ENCODE measurements at regions of chr2 and their contacts with region 1.

Region 1: DNA sequence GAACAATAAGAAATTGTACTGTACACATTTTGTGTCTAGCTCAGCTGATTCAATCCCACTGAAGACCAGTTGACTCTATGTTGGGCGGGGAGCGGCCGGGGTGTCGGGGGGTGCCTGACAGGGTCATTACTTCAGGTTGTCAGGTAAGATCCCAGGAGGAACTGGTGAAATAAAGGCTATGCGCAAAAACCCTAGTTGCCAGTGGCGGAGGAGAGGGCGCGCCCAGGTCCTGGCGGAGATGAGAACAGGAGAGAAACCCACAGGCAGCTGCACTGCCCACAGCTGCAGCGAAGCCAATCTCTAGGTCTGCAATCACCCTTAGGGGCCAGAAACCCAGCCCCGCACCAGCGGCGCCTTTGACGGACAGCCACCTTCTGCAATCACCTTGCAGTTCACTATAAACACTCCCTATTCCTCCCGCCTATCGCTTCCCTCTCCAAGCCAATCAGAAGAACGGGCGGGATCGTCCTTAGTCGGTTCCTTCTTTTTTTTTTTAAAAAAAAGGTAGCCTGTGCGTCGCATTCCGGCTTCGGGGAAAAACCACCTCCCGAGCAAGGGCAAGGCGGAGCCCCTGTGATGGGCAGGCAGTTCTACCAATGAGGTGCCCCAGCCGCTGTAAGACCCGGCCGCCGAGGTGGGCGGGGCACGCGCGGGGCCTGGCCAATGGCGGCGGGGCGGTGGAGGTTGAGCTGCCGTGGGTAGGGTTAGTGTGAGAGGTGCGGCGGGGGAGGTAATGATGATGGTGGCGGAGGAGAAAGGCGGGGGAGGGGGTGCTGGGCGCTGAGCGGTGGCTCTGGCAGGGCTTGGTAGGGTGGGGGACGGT is at the start of gene EHBP1:
- DNase-seq: peak; percentile 99 to 100
- H3K4me3 ChIP-seq: peak within 1 kb of the TSS; percentile 73
- H3K27ac ChIP-seq: peak within 1 kb of the TSS; percentile 80
- H3K4me1 ChIP-seq: peaks cover 37% of the 10 kb centered on the region
- H3K27me3 ChIP-seq: no peaks in the 10 kb centered on the region
- CTCF ChIP-seq: no peak
- total RNA-seq, gene EHBP1: 79.3 and 100 TPM in 2 replicates

Region 2: DNA sequence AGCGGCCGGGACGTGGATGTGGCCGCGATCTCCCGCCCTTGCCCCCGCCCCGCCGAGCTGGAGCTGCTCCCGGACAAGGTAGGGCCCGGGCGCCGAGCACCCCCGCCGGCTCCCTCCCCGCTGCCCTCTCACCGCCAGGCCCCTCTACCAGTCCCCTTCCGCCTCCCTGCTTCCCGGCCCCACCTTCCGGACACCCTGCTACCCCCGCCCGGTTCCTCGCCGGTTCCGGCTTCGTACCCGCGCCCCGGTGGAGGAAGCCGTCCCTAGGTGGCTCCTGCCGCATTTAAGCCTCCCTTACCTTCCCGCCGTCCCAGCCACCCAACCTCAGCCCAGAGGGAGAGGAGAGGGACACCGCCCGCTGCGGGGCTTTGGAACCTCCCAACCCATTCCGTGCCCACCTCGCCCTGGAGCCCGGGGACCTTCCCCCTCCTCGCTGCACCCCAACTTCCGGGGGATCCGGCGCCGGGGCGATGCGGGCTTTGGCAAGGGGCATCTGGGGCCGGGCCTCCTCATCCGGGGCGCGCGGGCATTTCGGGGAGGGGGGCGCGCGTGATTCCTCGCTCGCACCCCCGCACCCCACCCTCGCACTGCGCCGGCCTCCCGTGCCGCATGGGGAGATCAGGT is 508.8 kb before region 1 on chr2:
- CTCF ChIA-PET with region 1: no interaction called
- POLR2A ChIA-PET with region 1: no interaction called
- intact Hi-C with region 1: no loop called
- DNase-seq: peak in 1 of 2 experiments; percentile 39
- H3K4me3 ChIP-seq: peak overlapping the region; percentile 98
- H3K27ac ChIP-seq: peak overlapping the region; percentile 70
- H3K4me1 ChIP-seq: peaks cover 34% of the 10 kb centered on the region
- H3K27me3 ChIP-seq: no peaks in the 10 kb centered on the region
- CTCF ChIP-seq: no peak

Region 3: GRCh38 chr2:62456721-62457539 is 248.3 kb before region 1 on chr2:
- CTCF ChIA-PET with region 1: no interaction called
- POLR2A ChIA-PET with region 1: interaction called, 21 read pairs
- intact Hi-C with region 1: loop called (anchors 1 kb)
- DNase-seq: peak; percentile 85 to 88
- H3K4me3 ChIP-seq: peak overlapping the region; percentile 72
- H3K27ac ChIP-seq: peak overlapping the region; percentile 72
- H3K4me1 ChIP-seq: peaks cover 16% of the 10 kb centered on the region
- H3K27me3 ChIP-seq: no peaks in the 10 kb centered on the region
- CTCF ChIP-seq: peak; percentile 98

Region 4: GRCh38 chr2:62505750-62506420 is 199.3 kb before region 1 on chr2 and contains the start of gene TMEM17:
- CTCF ChIA-PET with region 1: no interaction called
- POLR2A ChIA-PET with region 1: interaction called, 3 read pairs
- intact Hi-C with region 1: loop called (anchors 1 kb)
- DNase-seq: peak; percentile 77 to 94
- H3K4me3 ChIP-seq: peak within 1 kb of the TSS; percentile 59
- H3K27ac ChIP-seq: peak within 1 kb of the TSS; percentile 77
- H3K4me1 ChIP-seq: peaks cover 57% of the 10 kb centered on the region
- H3K27me3 ChIP-seq: no peaks in the 10 kb centered on the region
- CTCF ChIP-seq: no peak
- total RNA-seq, gene TMEM17: 7.6 and 11.0 TPM in 2 replicates

Region 5: GRCh38 chr2:62577994-62578781 is 127.0 kb before region 1 on chr2:
- CTCF ChIA-PET with region 1: no interaction called
- POLR2A ChIA-PET with region 1: interaction called, 11 read pairs
- intact Hi-C with region 1: loop called (anchors 1 kb)
- DNase-seq: peak; percentile 45 to 98
- H3K4me3 ChIP-seq: peak overlapping the region; percentile 24; the same call in 1 of the 2 replicates
- H3K27ac ChIP-seq: peak overlapping the region; percentile 99
- H3K4me1 ChIP-seq: peaks cover 41% of the 10 kb centered on the region
- H3K27me3 ChIP-seq: no peaks in the 10 kb centered on the region
- CTCF ChIP-seq: no peak

Region 6: DNA sequence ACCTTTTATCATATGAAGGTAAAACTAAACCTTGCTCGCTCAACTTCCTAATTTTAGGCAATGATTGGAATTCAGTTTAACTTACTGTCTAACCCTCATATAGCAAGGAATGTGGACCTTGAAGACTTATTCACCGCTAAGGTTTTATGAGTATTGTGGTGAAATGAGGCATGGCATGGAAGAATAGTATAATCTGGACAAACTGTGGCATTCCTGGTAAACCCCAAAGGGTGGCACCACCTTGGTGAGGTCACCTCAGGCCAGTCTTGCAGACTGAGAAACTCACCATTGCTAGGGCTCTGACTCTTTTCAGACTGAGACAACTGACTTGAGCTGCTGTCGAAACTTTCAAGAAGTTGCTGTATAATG is 50.8 kb before region 1 on chr2:
- CTCF ChIA-PET with region 1: no interaction called
- POLR2A ChIA-PET with region 1: interaction called, 13 read pairs
- intact Hi-C with region 1: no loop called
- DNase-seq: peak; percentile 69 to 96
- H3K4me3 ChIP-seq: 0 out of 2 replicates have a peak overlapping the region, but pooled peaks have one; percentile 14
- H3K27ac ChIP-seq: peak overlapping the region; percentile 68
- H3K4me1 ChIP-seq: peaks cover 33% of the 10 kb centered on the region
- H3K27me3 ChIP-seq: no peaks in the 10 kb centered on the region
- CTCF ChIP-seq: no peak

Region 7: DNA sequence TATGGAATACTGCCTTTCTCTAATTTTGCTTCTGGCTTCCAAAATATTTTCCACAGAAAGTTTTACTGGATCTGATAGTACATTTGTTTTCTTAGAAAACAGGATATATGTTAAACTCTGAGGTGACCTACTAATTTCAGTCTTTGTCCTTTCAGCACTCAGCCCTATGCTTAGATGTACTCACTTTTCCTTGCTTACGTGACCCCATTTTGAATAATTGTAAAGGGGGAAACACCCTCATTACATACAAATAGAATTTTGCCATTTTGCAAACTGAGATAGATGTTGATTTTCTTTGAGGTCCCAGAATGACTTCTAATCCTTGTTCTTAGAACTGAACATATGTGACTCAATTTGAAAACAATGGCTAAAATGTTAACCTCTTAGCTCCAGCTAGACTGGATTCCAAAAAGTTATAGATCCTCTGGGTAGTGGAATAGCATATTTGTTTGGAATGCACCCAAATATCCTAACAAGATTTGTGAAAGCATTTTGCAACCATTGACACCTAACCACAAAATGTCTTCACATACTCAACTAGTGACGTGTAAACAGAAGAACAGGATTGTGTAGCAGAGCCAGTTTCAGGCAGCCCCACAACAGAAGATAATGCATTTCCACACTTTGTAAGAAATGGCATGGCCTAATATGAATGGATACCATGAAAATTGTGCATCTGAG is 44.5 kb before region 1 on chr2:
- CTCF ChIA-PET with region 1: no interaction called
- POLR2A ChIA-PET with region 1: interaction called, 17 read pairs
- intact Hi-C with region 1: loop called (anchors 1 kb)
- DNase-seq: peak; percentile 51 to 97
- H3K4me3 ChIP-seq: peak overlapping the region; percentile 8; the same call in 1 of the 2 replicates
- H3K27ac ChIP-seq: peak overlapping the region; percentile 80
- H3K4me1 ChIP-seq: peaks cover 62% of the 10 kb centered on the region
- H3K27me3 ChIP-seq: no peaks in the 10 kb centered on the region
- CTCF ChIP-seq: no peak

Region 8: GRCh38 chr2:62768615-62769014 is 63.4 kb after region 1 on chr2:
- CTCF ChIA-PET with region 1: no interaction called
- POLR2A ChIA-PET with region 1: no interaction called
- intact Hi-C with region 1: no loop called
- DNase-seq: no peak
- H3K4me3 ChIP-seq: no peak overlapping the region
- H3K27ac ChIP-seq: no peak overlapping the region
- H3K4me1 ChIP-seq: no peaks in the 10 kb centered on the region
- H3K27me3 ChIP-seq: no peaks in the 10 kb centered on the region
- CTCF ChIP-seq: no peak